ENCODE measurements at regions of chr17 and their contacts with region 1.

Region 1: GRCh38 chr17:79831367-79832210 is 7.7 kb downstream of the CBX4 start:
- DNase-seq: no peak
- ATAC-seq: peak; percentile 62
- H3K4me3 ChIP-seq: peak overlapping the region; percentile 11 to 29; a peak in 2 of 4 replicates
- H3K27ac ChIP-seq: peak overlapping the region; percentile 94
- H3K4me1 ChIP-seq: peaks cover 61% of the 10 kb centered on the region
- H3K27me3 ChIP-seq: no peaks in the 10 kb centered on the region
- CTCF ChIP-seq: no peak

Region 2: DNA sequence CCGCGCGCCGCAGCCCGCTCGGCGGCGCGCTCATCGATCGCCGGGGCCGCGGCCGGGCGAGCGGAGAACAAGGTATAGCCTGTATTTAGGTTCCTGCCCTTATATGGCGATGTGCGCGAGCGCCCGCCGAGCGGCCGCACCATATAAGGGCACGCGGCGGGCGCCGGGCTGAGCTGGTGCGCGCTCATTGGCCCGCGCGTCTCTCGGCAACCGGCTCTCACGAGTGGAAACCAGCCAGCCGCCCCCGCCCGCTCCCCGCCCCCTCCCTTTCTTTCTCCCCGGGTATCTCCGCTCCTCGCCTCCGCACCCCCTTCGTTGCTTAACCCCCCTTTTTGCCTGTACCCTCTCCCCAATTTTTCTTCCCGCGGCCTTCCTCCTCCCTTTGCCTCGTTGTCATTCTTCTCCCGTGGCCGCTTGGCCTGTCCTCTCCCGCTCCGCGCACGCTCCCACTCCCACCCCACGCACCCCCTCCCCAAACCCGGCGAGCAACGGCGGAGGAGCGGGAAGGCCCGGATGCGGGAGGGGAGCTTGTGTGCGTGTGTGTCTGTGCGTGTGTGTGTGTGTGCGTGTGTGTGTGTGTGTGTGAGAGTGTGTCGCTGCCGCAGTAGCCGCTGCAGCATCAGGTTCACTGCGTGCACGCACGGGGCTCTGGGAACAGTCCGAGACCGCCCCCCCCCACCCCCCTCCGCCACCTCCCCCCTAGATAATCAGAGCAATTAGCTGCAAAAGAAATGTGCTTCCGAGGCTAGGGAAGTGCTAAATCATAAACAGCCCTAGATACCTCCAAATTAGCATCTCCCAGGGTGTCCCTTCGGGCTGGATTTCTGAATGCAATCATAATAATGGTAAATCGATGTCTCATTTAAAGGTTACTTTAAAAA is 21.2 kb before region 1 on chr17:
- CTCF ChIA-PET with region 1: interaction called, 21 read pairs
- POLR2A ChIA-PET with region 1: interaction called, 8 read pairs
- in situ Hi-C with region 1: no loop called
- intact Hi-C with region 1: loop called (anchors 1 kb)
- DNase-seq: no peak
- ATAC-seq: peak; percentile 79
- H3K4me3 ChIP-seq: peak overlapping the region; percentile 43 to 46
- H3K27ac ChIP-seq: no peak overlapping the region
- H3K4me1 ChIP-seq: peaks cover 28% of the 10 kb centered on the region
- H3K27me3 ChIP-seq: no peaks in the 10 kb centered on the region
- CTCF ChIP-seq: no peak

Region 3: GRCh38 chr17:79864617-79865250 is 33.1 kb after region 1 on chr17:
- CTCF ChIA-PET with region 1: interaction called, 12 read pairs
- POLR2A ChIA-PET with region 1: no interaction called
- in situ Hi-C with region 1: no loop called
- intact Hi-C with region 1: no loop called
- DNase-seq: no peak
- ATAC-seq: no peak
- H3K4me3 ChIP-seq: no peak overlapping the region
- H3K27ac ChIP-seq: no peak overlapping the region
- H3K4me1 ChIP-seq: no peaks in the 10 kb centered on the region
- H3K27me3 ChIP-seq: no peaks in the 10 kb centered on the region
- CTCF ChIP-seq: no peak

Region 4: DNA sequence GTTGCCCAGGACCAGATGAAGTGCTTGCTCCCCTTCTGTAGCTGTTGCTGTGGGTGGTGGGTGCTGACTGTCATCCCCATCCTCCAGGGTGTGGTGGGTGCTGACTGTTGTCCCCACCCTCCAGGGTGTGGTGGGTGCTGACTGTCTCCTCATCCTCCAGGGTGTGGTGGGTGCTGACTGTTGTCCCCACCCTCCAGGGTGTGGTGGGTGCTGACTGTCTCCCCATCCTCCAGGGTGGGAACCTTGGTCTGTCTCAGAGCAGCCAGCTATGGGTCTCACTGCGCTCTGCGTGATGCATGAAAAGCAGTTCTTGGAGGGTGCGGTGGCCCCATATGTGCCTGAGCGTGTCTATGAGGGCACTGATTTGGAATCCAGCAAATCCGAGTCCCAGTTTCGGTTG is 876.9 kb after region 1 on chr17:
- CTCF ChIA-PET with region 1: no interaction called
- POLR2A ChIA-PET with region 1: no interaction called
- in situ Hi-C with region 1: no loop called
- intact Hi-C with region 1: no loop called
- DNase-seq: no peak
- ATAC-seq: no peak
- H3K4me3 ChIP-seq: no peak overlapping the region
- H3K27ac ChIP-seq: no peak overlapping the region
- H3K4me1 ChIP-seq: peaks cover 11% of the 10 kb centered on the region
- H3K27me3 ChIP-seq: no peaks in the 10 kb centered on the region
- CTCF ChIP-seq: no peak